ENCODE measurements at regions of chr18 and their contacts with region 1.

Region 1: DNA sequence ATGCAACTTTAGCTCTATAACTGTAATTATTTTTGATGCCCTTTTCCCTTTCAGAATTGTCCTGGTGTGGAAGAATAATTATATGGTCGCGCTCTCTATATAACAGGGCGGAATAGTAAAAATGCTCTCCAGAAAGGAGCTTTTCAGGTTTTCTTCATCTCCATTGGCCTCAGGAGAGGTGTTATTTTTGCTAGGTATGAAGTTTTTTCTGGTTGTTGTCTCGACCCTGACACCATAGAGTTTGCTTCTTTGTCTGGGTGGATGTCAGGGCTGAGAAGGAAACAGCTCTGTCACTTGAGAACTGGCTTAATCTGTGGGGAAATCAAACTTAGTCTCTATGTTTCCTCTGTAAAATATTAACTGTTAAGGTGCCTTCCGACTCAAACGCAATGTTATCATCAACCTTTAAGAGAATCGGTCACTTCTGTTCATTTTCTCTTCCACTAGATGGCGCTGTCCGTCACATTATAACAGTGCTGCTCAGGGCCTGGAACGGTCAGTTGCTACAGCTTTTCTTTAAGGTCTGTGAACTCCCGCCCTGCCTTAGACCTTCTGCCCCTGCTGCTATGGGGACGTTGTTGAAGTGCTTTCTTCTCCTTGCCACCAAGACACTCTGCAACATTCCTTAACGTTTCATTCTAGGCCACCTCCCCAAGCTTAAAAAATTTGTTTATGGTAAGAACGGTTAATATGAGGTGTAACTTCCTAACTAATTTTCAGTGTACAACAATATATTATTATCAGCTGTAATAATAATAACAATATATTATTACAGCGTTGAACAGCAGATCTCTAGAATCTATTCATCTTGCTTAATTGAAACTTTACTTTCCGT is 23.8 kb upstream of the SERPINB12 start:
- DNase-seq: peak in 6 of 10 donors; percentile 27 to 86 (median 56)

Region 2: GRCh38 chr18:63339920-63340484 is 178.4 kb before region 1 on chr18:
- intact Hi-C with region 1: no loop called
- DNase-seq: peak in 2 of 10 donors; percentile 28 to 44

Region 3: GRCh38 chr18:63578357-63578958 is 60.1 kb after region 1 on chr18:
- intact Hi-C with region 1: loop called (anchors 1 kb)
- DNase-seq: no peak

Region 4: GRCh38 chr18:63730773-63731172 is 212.4 kb after region 1 on chr18:
- intact Hi-C with region 1: loop called (anchors 10 kb)
- DNase-seq: no peak

Region 5: GRCh38 chr18:63844254-63844653 is 325.9 kb after region 1 on chr18:
- intact Hi-C with region 1: loop called (anchors 2 kb)
- DNase-seq: no peak

Region 6: DNA sequence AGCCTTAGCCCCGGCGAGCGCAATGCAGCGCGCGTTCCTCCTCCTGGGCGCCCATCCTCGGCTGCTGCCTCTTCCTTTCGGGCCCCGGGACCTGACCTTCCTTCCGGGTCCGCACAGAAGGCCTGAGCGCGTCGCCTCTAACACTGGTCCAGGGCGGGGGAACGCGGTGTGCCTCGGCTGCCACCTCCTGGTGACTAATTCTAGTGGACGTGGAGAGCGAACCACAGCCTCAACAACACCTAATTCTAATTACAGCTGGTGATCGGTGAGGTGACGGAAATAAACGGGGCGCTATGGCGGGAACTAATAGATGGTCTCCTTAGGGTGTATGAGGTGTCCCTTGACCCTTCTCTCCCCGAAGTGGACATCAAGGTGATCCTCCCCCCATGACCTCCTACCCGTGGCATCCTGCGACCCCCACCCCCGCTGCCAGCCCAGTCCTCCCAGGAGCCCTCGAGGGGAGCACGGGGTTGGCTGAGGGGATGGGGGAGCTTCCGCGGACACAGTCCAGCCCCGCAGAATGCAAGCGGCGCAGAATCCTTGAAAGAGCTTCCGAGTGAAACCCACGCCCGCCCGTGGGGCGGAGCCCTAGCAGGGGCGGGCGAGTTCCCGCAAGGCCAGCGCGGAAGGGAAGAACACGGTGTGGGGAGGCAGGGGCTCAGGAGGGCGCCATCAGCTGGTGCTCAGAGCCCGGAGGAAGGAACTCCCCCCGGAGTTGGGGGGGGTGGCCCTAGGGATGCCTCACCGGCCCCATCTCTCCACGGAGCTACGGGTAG is 417.9 kb after region 1 on chr18:
- intact Hi-C with region 1: loop called (anchors 5 kb)
- DNase-seq: peak; percentile 36 to 95 (median 76)

Measured in posterior cingulate gyrus (tissue), 11 donors.